Aorta (tissue), 5 donors: ENCODE measurements at regions of chr14 and their contacts with region 1.

Region 1: GRCh38 chr14:68718023-68718995 is 74.6 kb downstream of the ZFP36L1 start:
- DNase-seq: no peak
- ATAC-seq: no peak
- H3K4me3 ChIP-seq: no peak overlapping the region
- H3K27ac ChIP-seq: no peak overlapping the region
- H3K4me1 ChIP-seq: no peaks in the 10 kb centered on the region
- H3K27me3 ChIP-seq: no peaks in the 10 kb centered on the region

Region 2: DNA sequence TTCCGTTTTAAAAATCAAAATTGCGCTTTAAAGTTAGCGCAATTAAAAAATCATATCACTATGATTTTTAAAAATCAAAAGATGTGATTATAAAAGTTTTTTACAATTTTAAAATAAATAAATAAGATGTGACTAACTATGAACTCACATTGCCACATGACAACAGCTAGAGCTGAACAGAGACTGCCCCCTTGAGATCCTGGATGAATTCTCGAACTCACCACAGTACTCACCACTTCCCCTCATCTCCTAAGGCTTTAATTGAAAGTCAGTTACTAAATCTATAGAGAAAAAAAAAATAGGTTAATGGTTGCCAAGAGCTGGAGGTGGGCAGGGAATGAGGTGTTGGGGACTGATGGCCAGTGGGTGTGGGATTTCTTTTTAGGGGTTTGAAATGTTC is 309.6 kb before region 1 on chr14:
- intact Hi-C with region 1: no loop called
- DNase-seq: no peak
- ATAC-seq: no peak
- H3K4me3 ChIP-seq: no peak overlapping the region
- H3K27ac ChIP-seq: no peak overlapping the region
- H3K4me1 ChIP-seq: no peaks in the 10 kb centered on the region
- H3K27me3 ChIP-seq: no peaks in the 10 kb centered on the region

Region 3: DNA sequence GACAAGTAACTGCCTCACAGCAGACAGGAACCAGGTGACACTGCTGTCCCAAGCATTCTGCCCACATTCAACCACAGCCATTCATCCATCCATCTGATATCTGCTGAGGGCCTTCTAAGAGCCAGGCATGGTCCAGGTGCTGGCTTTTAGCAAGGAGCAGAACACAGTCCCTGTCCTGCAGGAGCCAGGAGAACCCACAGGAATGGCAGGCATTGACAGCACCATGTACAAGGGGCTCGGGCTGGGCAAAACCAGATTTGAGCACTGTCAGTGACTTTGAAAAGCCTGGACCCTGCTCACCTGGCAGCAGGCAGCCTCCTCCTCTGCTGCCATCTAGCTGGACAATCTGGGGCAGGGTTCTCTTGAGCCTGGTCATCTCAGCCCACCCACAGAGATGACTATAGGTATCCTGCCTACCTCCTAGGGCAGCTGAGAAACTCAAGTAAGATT is 62.4 kb before region 1 on chr14:
- intact Hi-C with region 1: no loop called
- DNase-seq: no peak
- ATAC-seq: no peak
- H3K4me3 ChIP-seq: no peak overlapping the region
- H3K27ac ChIP-seq: no peak overlapping the region
- H3K4me1 ChIP-seq: no peaks in the 10 kb centered on the region
- H3K27me3 ChIP-seq: no peaks in the 10 kb centered on the region

Region 4: GRCh38 chr14:68757618-68758081 is 39.3 kb after region 1 on chr14:
- intact Hi-C with region 1: loop called in 1 of 2 experiments (anchors 5 kb)
- DNase-seq: peak in 1 of 2 donors; percentile 85
- ATAC-seq: peak; percentile 53
- H3K4me3 ChIP-seq: no peak overlapping the region
- H3K27ac ChIP-seq: no peak overlapping the region
- H3K4me1 ChIP-seq: no peaks in the 10 kb centered on the region
- H3K27me3 ChIP-seq: no peaks in the 10 kb centered on the region

Region 5: DNA sequence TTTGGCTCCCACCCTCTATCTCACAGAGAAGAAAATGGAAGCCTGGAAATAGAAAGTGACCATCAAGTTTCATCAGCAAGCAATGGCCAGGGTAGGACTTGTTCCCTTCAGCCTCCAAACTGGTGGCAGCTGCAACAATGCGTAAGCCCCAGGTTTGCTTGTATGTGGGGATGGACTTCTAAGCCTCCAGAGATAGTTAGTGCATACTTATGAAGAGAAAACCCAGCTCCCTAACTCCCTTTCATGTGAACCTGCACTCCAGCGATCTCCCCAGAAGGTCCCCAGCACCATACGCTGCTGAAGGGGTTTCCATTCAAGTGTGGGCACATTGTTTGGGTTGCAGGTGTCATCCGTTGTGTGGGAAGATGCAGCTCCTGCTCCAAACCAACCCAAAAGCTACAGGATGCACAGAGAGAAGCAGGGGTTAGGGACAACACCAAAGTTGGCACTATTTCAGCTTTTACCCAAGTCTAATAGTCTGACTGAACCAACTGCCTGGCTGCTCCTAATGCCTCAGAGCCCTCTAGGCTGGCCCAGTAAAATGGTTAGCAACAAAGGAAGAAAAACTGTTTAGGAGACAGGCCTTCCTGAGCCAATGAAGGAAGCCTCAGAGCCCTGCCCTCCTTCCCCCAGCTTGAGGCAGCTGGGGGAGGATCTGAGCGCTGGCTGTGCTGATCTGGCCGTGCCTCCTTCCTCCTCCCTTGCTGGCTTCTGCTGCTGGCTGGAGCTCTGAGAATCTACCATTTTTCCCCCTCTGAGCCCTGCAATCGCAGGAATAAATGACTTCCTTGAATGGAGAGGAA is 62.2 kb after region 1 on chr14:
- intact Hi-C with region 1: no loop called
- DNase-seq: peak in 1 of 2 donors; percentile 86
- ATAC-seq: peak; percentile 67
- H3K4me3 ChIP-seq: no peak overlapping the region
- H3K27ac ChIP-seq: peak overlapping the region; percentile 0 to 22
- H3K4me1 ChIP-seq: peaks cover 0 to 2% of the 10 kb centered on the region in 2 donors
- H3K27me3 ChIP-seq: no peaks in the 10 kb centered on the region